ENCODE measurements at regions of chr18 and their contacts with region 1.

Region 1: DNA sequence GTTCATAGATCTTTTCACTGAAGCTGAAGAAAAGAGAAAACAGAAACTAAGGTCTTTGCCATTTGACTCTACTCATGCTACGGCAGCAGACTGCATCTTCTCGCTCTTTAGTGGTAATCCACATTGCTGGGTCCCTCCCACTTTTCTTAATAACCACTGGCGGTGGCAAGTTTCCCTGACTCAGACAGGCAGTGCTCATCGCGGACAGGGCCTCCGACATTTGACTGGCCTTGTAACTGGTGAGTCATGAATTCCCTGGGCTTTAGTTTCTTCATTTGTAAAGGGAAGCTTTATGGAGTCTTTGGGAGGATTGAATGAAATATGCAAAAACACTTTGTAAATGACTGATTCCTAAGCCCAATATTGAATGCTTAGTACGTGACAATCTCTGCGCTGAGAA is 238.2 kb upstream of the RBBP8 start:
- DNase-seq: peak; percentile 70
- H3K4me3 ChIP-seq: no peak overlapping the region
- CTCF ChIP-seq: no peak

Region 2: DNA sequence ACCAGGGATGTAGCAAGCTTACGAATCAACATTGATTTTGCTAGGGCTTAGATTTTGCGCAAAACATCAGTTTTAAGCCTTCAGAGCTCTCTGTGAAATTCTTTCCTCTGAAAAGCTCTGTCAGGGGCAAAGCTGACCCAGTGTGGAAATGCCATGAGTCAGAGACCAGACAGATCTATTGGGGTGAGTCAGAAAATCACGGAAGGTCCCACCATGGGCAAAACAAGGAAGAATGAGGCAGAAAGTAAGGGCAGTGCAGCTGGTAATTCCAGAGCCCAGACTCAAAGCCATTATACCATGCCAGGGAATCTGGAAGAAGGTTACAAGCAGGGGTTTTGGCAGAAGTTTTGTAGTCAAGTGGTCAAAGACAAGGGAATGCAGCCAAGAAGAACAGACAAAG is 20.7 kb before region 1 on chr18:
- CTCF ChIA-PET with region 1: interaction called, 3 read pairs
- POLR2A ChIA-PET with region 1: interaction called, 11 read pairs
- DNase-seq: peak; percentile 80
- H3K4me3 ChIP-seq: no peak overlapping the region
- CTCF ChIP-seq: no peak

Measured in AG04449 (cell line).